ENCODE measurements at regions of chr10 and their contacts with region 1.

Region 1: GRCh38 chr10:104291439-104291951 is 22.5 kb downstream of the GSTO2 start:
- DNase-seq: peak; percentile 83 to 86 (median 85)
- H3K4me3 ChIP-seq: no peak overlapping the region
- H3K4me3 Mint-ChIP-seq: peak overlapping the region in 2 of 8 donors; percentile 26 to 74
- H3K27ac ChIP-seq: no peak overlapping the region
- H3K27ac Mint-ChIP-seq: peak overlapping the region in 2 of 7 donors; percentile 24 to 25
- H3K4me1 ChIP-seq: peaks cover 5% of the 10 kb centered on the region
- H3K4me1 Mint-ChIP-seq: peaks cover 4 to 6% (median 5%) of the 10 kb centered on the region in 4 donors
- H3K27me3 ChIP-seq: no peaks in the 10 kb centered on the region
- H3K27me3 Mint-ChIP-seq: peaks cover 11 to 20% of the 10 kb centered on the region in 2 donors

Region 2: DNA sequence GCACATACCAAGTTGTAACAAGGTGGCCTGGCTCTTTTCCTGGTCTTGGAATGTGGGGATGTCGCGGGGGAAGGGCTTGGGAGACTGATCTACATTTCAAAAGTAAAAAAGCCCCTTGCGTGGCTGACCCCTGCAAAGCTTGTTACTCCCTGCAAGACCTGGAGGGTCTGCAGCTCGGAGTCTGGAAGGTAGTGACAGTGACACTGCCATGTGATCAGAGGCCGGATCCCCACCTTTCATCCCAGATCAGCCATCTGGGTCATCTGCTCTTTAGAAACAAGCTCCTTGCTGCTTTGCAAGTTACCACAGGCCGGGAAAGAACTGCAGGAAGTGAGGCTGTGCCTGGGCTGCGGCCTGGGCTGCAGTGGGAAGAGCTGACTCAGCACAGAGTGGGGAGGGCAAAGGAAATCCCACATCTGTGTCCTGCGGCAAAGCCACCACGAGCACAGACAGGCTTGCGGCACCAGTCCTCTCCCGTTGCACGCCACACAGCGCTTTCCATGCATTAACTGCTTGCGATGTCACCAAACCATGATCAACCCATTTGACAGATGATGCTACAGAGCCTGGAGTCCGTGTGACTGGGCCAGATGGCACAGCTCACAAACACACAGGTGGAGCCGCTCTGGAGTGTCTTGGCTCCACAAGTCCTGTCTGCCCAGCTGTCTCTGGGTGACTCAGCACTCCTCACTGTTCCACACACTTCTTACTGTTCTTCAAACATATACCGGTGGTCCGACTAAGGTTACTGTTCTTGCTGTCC is 533.8 kb before region 1 on chr10:
- CTCF ChIA-PET with region 1: no interaction called
- POLR2A ChIA-PET with region 1: no interaction called
- intact Hi-C with region 1: no loop called
- DNase-seq: peak in 3 of 5 donors; percentile 37 to 71 (median 52)
- H3K4me3 ChIP-seq: peak overlapping the region in 1 of 2 donors; percentile 36
- H3K4me3 Mint-ChIP-seq: peak overlapping the region in 7 of 8 donors; percentile 18 to 76 (median 57)
- H3K27ac ChIP-seq: no peak overlapping the region
- H3K27ac Mint-ChIP-seq: peak overlapping the region; percentile 60 to 87 (median 78)
- H3K4me1 ChIP-seq: peaks cover 49% of the 10 kb centered on the region
- H3K4me1 Mint-ChIP-seq: peaks cover 23 to 52% (median 40%) of the 10 kb centered on the region in 4 donors
- H3K27me3 ChIP-seq: no peaks in the 10 kb centered on the region
- H3K27me3 Mint-ChIP-seq: no peaks in the 10 kb centered on the region

Region 3: DNA sequence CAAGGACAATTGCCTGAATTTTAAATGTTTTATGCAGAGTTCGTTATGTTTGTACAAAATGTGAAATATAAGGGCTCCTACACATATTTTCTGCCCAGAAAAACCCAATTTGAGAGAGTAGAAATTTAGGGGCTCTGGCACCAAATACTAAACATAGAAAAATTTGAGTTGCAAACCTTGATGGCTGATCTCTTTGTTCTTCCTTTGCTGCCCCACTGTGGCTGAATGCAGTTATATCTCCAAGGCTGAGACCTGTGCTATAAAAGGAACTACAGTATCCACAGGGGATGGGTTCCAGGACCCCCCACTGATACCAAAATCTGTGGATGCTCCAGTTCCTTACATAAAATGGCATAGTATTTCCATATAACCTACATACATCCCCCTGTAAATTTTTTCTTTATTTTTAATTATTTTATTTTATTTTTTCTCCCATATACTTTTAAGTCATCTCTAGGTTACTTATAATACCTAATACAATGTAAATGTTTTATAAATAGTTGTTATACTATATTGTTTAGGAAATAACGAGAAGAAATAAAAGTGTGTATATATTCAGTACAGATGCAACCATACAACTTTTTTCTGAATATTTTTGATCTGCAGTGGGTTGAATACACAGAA is 81.8 kb before region 1 on chr10:
- CTCF ChIA-PET with region 1: no interaction called
- POLR2A ChIA-PET with region 1: no interaction called
- intact Hi-C with region 1: no loop called
- DNase-seq: peak; percentile 38 to 55 (median 42)
- H3K4me3 ChIP-seq: no peak overlapping the region
- H3K4me3 Mint-ChIP-seq: no peak overlapping the region
- H3K27ac ChIP-seq: no peak overlapping the region
- H3K27ac Mint-ChIP-seq: no peak overlapping the region
- H3K4me1 ChIP-seq: no peaks in the 10 kb centered on the region
- H3K4me1 Mint-ChIP-seq: no peaks in the 10 kb centered on the region
- H3K27me3 ChIP-seq: no peaks in the 10 kb centered on the region
- H3K27me3 Mint-ChIP-seq: peaks cover 7 to 16% of the 10 kb centered on the region in 2 donors

Region 4: DNA sequence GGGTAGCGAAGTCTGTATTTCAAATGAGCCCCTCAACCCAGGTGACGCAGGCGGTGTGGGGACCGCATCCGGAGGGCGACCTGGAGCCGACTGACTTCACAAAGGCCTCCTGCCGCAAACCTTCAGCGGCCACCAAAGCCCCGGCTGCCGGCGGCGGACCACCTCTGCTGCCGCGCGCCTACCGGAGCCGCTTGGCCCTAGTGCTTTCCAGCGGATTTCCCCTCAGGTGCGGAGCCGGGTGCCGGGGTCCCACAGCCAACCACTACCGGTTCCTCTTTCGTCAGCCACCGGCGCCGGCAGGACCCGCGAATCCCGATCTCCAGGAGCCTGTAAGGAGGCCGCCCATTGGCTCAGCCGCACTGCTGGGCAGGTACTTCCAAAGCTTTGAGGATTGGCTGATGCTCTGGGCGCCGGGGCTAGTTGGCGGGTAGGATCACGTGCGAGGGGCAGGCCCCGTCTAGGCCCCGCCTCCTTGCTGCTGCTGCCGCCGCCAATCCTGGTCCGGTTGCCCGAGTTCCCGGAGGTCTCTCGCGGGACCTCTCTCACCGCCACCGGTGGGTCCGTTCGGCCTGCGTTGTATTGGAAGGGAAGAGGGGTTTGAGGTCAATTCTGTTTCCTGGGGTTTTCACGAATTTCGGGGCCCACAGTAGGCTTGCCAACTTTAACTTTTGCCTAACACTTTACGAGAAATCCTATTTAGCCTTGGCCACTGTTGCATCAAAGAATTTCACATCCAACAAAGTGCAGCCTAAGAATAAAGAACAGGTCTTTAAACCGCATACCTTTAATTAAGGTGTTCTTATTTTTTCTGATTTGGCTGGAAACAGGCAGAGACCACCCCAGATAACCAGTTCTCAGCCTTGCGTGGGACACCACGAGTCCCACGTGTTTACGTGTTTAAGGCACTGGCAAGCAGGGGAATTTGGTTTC is 22.5 kb before region 1 on chr10 and contains the start of gene GSTO2:
- CTCF ChIA-PET with region 1: interaction called, 202 read pairs
- POLR2A ChIA-PET with region 1: interaction called, 4 read pairs
- intact Hi-C with region 1: no loop called
- DNase-seq: peak; percentile 97 to 100 (median 99)
- H3K4me3 ChIP-seq: peak within 1 kb of the TSS; percentile 67 to 89
- H3K4me3 Mint-ChIP-seq: peak within 1 kb of the TSS; percentile 91 to 96 (median 92)
- H3K27ac ChIP-seq: peak within 1 kb of the TSS; percentile 90
- H3K27ac Mint-ChIP-seq: peak within 1 kb of the TSS; percentile 91 to 99 (median 96)
- H3K4me1 ChIP-seq: peaks cover 49% of the 10 kb centered on the region
- H3K4me1 Mint-ChIP-seq: peaks cover 28 to 56% (median 39%) of the 10 kb centered on the region in 4 donors
- H3K27me3 ChIP-seq: no peaks in the 10 kb centered on the region
- H3K27me3 Mint-ChIP-seq: no peaks in the 10 kb centered on the region
- total RNA-seq, gene GSTO2: 1.6 to 2.3 TPM

Region 5: GRCh38 chr10:104308439-104308903 is 17.0 kb after region 1 on chr10:
- CTCF ChIA-PET with region 1: interaction called, 163 read pairs
- POLR2A ChIA-PET with region 1: interaction called, 3 read pairs
- intact Hi-C with region 1: loop called (anchors 1 kb)
- DNase-seq: peak; percentile 49 to 57 (median 51)
- H3K4me3 ChIP-seq: no peak overlapping the region
- H3K4me3 Mint-ChIP-seq: peak overlapping the region; percentile 8 to 84 (median 64)
- H3K27ac ChIP-seq: no peak overlapping the region
- H3K27ac Mint-ChIP-seq: peak overlapping the region; percentile 49 to 92 (median 82)
- H3K4me1 ChIP-seq: peaks cover 60% of the 10 kb centered on the region
- H3K4me1 Mint-ChIP-seq: peaks cover 42 to 82% (median 62%) of the 10 kb centered on the region in 4 donors
- H3K27me3 ChIP-seq: no peaks in the 10 kb centered on the region
- H3K27me3 Mint-ChIP-seq: no peaks in the 10 kb centered on the region

Region 6: DNA sequence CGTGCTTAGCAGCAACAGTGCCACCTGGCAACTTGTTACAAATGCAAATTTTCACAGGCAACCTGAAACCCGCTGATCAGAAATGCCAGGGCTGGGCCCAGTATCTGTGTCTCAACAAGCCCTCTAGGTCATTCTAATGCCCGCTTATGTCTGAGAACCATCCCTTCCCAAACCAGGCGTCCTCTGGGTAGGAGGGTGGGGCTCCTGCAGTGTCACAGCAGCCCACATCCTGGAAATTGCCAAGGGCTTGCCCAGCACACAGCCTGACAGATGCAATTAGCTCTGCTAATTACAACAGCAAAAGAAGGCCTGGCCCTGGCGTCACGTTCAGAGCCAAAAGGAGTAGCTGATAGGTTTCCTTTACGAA is 30.9 kb after region 1 on chr10:
- CTCF ChIA-PET with region 1: interaction called, 47 read pairs
- POLR2A ChIA-PET with region 1: no interaction called
- intact Hi-C with region 1: no loop called
- DNase-seq: peak in 2 of 5 donors; percentile 38 to 61
- H3K4me3 ChIP-seq: peak overlapping the region; percentile 31 to 42
- H3K4me3 Mint-ChIP-seq: peak overlapping the region; percentile 72 to 86 (median 81)
- H3K27ac ChIP-seq: peak overlapping the region; percentile 31
- H3K27ac Mint-ChIP-seq: peak overlapping the region; percentile 94 to 98 (median 95)
- H3K4me1 ChIP-seq: peaks cover 84% of the 10 kb centered on the region
- H3K4me1 Mint-ChIP-seq: peaks cover 63 to 100% (median 87%) of the 10 kb centered on the region in 4 donors
- H3K27me3 ChIP-seq: no peaks in the 10 kb centered on the region
- H3K27me3 Mint-ChIP-seq: no peaks in the 10 kb centered on the region

Region 7: DNA sequence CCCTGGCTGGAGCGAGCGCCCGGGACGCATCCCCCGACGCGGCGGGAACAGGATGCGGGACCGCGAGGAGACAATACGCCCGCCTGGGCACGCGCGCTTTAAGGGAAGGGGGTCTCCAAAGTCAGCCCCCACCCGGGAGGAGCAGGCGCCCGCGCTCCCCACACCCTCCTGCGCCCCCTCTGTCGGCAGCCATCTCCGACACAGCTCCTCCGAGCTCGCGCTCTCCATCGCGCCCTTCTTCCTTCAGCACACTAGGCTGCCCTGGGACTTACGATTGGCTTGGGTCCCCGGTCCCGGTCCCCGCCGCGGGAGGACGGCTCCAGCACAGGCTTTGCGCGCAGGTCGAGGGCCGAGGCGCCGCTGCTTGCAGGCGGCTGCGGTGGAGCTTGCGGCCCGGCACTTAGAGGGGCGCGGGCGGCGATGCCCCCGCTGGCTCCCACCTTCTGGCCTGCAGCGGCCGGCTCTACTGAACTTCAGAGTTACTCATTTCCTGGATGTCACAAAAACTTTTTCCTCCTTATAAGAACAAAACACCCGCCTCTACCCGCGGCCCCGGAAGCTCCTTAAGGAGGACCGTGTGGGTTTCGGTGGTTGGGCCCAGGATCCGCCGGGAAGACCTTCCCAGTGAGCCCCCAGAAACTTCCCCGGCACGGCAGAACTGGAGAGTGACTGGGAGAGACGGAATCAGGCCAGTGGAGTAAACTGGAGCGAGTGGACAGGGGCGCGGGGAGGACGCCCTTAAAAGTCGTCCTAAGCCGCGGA is 46.7 kb after region 1 on chr10 and contains the start of gene ITPRIP:
- CTCF ChIA-PET with region 1: interaction called, 25 read pairs
- POLR2A ChIA-PET with region 1: interaction called, 5 read pairs
- intact Hi-C with region 1: loop called (anchors 1 kb)
- DNase-seq: peak; percentile 81 to 88 (median 85)
- H3K4me3 ChIP-seq: peak within 1 kb of the TSS; percentile 51 to 80
- H3K4me3 Mint-ChIP-seq: peak within 1 kb of the TSS; percentile 96 to 100 (median 99)
- H3K27ac ChIP-seq: peak within 1 kb of the TSS; percentile 83
- H3K27ac Mint-ChIP-seq: peak within 1 kb of the TSS; percentile 97 to 100 (median 99)
- H3K4me1 ChIP-seq: peaks cover 48% of the 10 kb centered on the region
- H3K4me1 Mint-ChIP-seq: peaks cover 28 to 62% (median 42%) of the 10 kb centered on the region in 4 donors
- H3K27me3 ChIP-seq: no peaks in the 10 kb centered on the region
- H3K27me3 Mint-ChIP-seq: peaks cover 0 to 3% of the 10 kb centered on the region in 2 donors
- total RNA-seq, gene ITPRIP: 15.6 to 15.7 TPM

Region 8: GRCh38 chr10:104580774-104581675 is 289.5 kb after region 1 on chr10:
- CTCF ChIA-PET with region 1: no interaction called
- POLR2A ChIA-PET with region 1: no interaction called
- intact Hi-C with region 1: loop called (anchors 2 kb)
- DNase-seq: peak; percentile 48 to 62 (median 60)
- H3K4me3 ChIP-seq: no peak overlapping the region
- H3K4me3 Mint-ChIP-seq: peak overlapping the region in 2 of 8 donors; percentile 38 to 60
- H3K27ac ChIP-seq: no peak overlapping the region
- H3K27ac Mint-ChIP-seq: peak overlapping the region in 2 of 7 donors; percentile 0 to 10
- H3K4me1 ChIP-seq: no peaks in the 10 kb centered on the region
- H3K4me1 Mint-ChIP-seq: peaks cover 6 to 13% (median 9%) of the 10 kb centered on the region in 4 donors
- H3K27me3 ChIP-seq: no peaks in the 10 kb centered on the region
- H3K27me3 Mint-ChIP-seq: peaks cover 16 to 32% of the 10 kb centered on the region in 2 donors

Measured in CD4-positive, alpha-beta memory T cell (primary cell).